ENCODE measurements at regions of chr20 and their contacts with region 1.

Region 1: DNA sequence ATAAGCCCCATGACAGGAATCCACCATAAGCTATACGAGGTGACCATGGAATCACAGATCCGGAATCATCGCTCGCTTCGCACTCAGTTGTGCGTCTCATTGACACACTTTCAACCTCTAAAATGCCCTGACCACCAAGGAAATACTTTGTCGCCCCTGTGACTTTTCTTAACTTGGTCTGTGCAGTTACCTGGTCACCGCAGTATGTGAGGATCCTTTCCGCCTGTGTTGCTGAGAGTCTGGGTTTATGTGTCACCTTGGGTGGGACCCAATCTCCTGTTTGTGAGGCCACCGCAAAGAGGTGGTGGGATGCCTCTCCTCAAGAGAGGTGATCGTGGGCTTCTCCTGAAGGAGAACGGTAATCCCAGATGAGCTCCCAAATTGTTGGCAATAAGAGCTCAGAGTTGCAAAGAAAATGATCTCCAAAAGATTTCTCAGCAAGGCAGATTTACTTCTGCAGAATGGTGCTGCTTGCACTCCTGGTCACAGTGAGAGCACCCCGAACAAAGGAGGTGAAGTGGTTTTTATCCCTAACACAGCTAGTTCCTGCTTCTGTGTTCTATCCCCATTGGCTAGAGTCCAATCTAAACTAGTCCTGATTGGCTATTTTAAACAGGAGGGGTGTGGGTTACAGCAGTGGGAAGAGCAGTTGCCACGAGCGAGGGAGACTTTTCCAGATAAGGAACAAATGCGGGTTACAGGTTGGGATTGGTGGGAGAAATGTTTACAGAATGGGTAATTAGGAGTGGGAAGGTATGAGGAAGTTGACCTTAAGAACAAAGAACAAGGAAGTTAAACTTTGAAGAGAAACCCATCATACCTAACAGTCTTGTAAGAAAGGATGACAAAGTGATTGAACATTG is 9.1 kb upstream of the ZNFX1 start:
- DNase-seq: no peak
- ATAC-seq: no peak
- H3K4me3 Mint-ChIP-seq: peak overlapping the region; percentile 100
- H3K27ac Mint-ChIP-seq: peak overlapping the region; percentile 100
- H3K4me1 Mint-ChIP-seq: peaks cover 58% of the 10 kb centered on the region
- H3K27me3 Mint-ChIP-seq: no peaks in the 10 kb centered on the region
- CTCF ChIP-seq: no peak

Region 2: GRCh38 chr20:49297605-49298530 is 10.9 kb after region 1 on chr20:
- CTCF ChIA-PET with region 1: interaction called, 4 read pairs
- POLR2A ChIA-PET with region 1: interaction called, 148 read pairs
- intact Hi-C with region 1: no loop called
- DNase-seq: peak; percentile 42
- ATAC-seq: peak; percentile 80
- H3K4me3 Mint-ChIP-seq: no peak overlapping the region
- H3K27ac Mint-ChIP-seq: peak overlapping the region; percentile 79
- H3K4me1 Mint-ChIP-seq: peaks cover 17% of the 10 kb centered on the region
- H3K27me3 Mint-ChIP-seq: no peaks in the 10 kb centered on the region
- CTCF ChIP-seq: no peak

Region 3: GRCh38 chr20:49303065-49303552 is 16.2 kb after region 1 on chr20:
- CTCF ChIA-PET with region 1: interaction called, 4 read pairs
- POLR2A ChIA-PET with region 1: interaction called, 28 read pairs
- intact Hi-C with region 1: no loop called
- DNase-seq: no peak
- ATAC-seq: no peak
- H3K4me3 Mint-ChIP-seq: no peak overlapping the region
- H3K27ac Mint-ChIP-seq: no peak overlapping the region
- H3K4me1 Mint-ChIP-seq: peaks cover 8% of the 10 kb centered on the region
- H3K27me3 Mint-ChIP-seq: no peaks in the 10 kb centered on the region
- CTCF ChIP-seq: no peak

Region 4: DNA sequence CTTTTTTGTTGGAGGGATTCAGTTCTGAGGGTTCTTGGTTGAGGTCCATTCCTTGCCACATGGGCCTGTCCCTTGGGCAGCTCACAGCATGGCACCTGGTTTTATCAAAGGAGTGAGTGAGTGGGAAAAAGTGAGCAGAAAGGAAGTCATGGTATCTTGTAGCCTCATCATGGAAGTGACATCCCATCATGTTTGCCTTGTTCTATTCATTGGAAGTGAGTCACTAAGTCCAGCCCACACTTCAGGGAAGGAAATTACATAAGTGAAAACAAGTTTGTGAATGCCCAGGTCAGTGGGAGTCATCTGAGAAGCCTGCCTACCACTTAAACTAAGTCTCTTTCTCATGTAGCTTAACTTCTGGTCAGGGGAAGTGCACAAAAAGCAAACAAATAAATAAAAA is 23.8 kb after region 1 on chr20:
- CTCF ChIA-PET with region 1: no interaction called
- POLR2A ChIA-PET with region 1: interaction called, 11 read pairs
- intact Hi-C with region 1: no loop called
- DNase-seq: no peak
- ATAC-seq: peak; percentile 66
- H3K4me3 Mint-ChIP-seq: no peak overlapping the region
- H3K27ac Mint-ChIP-seq: peak overlapping the region; percentile 44
- H3K4me1 Mint-ChIP-seq: peaks cover 23% of the 10 kb centered on the region
- H3K27me3 Mint-ChIP-seq: peaks cover 1% of the 10 kb centered on the region
- CTCF ChIP-seq: no peak

Measured in activated CD8-positive, alpha-beta T cell treated with anti-CD3 and anti-CD28 coated beads for 36 hours (primary cell).